ENCODE measurements at regions of chr3 and their contacts with region 1.

Region 1: DNA sequence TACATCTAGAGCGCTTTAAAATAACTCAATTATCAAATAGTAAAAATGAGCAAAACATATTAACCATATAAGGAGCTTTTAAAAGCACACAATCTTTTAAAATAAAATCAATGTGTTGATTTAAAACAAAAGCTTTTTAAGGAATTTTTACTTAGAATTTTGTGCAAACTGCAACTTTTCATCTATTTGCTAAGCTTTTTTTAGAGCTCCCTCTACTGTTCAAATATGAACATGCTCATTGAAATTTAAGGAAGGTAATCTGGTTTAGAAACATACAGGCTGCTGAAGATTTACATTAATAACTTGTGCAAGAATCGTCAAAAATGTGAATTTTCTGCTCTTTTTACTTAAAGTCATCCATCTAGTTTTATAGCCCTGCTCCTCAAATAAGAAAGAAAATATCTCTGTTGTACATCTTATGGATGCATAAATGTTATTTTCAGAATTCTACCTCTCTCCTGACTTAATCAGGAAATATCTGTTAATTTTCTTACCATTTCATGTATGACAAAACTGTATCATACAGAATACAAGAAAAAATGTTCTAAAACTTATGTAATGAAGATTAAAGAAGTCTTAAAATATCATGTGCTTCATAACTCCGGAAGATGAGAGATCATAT is 469.4 kb upstream of the ROBO2 start:
- DNase-seq: peak; percentile 48
- ATAC-seq: no peak
- H3K4me3 ChIP-seq: no peak overlapping the region
- H3K27ac ChIP-seq: no peak overlapping the region
- H3K4me1 ChIP-seq: no peaks in the 10 kb centered on the region
- H3K27me3 ChIP-seq: no peaks in the 10 kb centered on the region
- CTCF ChIP-seq: peak; percentile 89

Region 2: GRCh38 chr3:75814797-75815196 is 755.8 kb before region 1 on chr3:
- CTCF ChIA-PET with region 1: no interaction called
- POLR2A ChIA-PET with region 1: no interaction called
- intact Hi-C with region 1: loop called (anchors 5 kb)
- DNase-seq: no peak
- ATAC-seq: no peak
- H3K4me3 ChIP-seq: no peak overlapping the region
- H3K27ac ChIP-seq: no peak overlapping the region
- H3K4me1 ChIP-seq: no peaks in the 10 kb centered on the region
- H3K27me3 ChIP-seq: no peaks in the 10 kb centered on the region
- CTCF ChIP-seq: no peak

Region 3: DNA sequence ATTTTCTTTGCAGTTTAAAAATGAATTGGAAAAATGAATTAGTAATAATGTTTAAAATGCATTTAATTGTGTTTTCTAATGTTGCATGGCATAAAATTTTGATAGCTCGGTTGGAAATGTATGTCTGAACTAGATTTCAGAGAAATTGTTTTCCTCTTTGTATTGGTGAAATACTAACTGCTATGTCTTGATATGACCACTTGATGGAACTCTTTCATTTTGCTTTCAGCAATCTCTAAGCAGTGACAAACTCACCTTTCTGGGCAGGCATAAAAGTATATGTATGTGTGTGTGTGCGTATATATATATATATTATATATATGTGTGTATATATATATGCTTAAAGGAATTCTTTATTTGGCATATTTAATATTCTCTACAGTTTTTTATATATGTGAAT is 545.9 kb before region 1 on chr3:
- CTCF ChIA-PET with region 1: no interaction called
- POLR2A ChIA-PET with region 1: no interaction called
- intact Hi-C with region 1: loop called (anchors 5 kb)
- DNase-seq: peak; percentile 63
- ATAC-seq: peak; percentile 63
- H3K4me3 ChIP-seq: no peak overlapping the region
- H3K27ac ChIP-seq: no peak overlapping the region
- H3K4me1 ChIP-seq: peaks cover 15% of the 10 kb centered on the region
- H3K27me3 ChIP-seq: no peaks in the 10 kb centered on the region
- CTCF ChIP-seq: peak; percentile 66

Region 4: GRCh38 chr3:76044601-76045600 is 525.6 kb before region 1 on chr3:
- CTCF ChIA-PET with region 1: no interaction called
- POLR2A ChIA-PET with region 1: no interaction called
- intact Hi-C with region 1: loop called (anchors 5 kb)
- DNase-seq: peak; percentile 69
- ATAC-seq: peak; percentile 60
- H3K4me3 ChIP-seq: no peak overlapping the region
- H3K27ac ChIP-seq: no peak overlapping the region
- H3K4me1 ChIP-seq: peaks cover 6% of the 10 kb centered on the region
- H3K27me3 ChIP-seq: no peaks in the 10 kb centered on the region
- CTCF ChIP-seq: peak; percentile 88

Region 5: DNA sequence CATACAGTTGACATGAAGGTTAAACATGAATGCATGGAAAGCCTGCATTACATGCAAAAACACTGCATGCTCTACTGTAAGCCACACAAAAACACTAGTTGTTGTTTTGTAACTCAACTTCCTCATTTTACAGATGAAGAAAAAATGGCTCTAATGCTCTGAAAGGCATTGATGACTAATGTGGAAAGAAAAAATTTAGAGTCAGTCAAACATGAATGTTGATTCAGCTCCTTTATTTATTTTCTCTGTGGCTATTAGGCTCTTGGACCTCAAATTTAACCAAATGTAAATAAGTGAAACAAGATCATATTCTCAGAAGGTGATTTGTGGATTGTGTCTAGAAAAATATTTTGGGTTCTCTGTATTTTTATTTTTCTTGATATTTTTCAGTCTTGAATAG is 448.5 kb before region 1 on chr3:
- CTCF ChIA-PET with region 1: no interaction called
- POLR2A ChIA-PET with region 1: no interaction called
- intact Hi-C with region 1: loop called (anchors 10 kb)
- DNase-seq: peak; percentile 79
- ATAC-seq: peak; percentile 77
- H3K4me3 ChIP-seq: no peak overlapping the region
- H3K27ac ChIP-seq: no peak overlapping the region
- H3K4me1 ChIP-seq: peaks cover 25% of the 10 kb centered on the region
- H3K27me3 ChIP-seq: no peaks in the 10 kb centered on the region
- CTCF ChIP-seq: no peak

Region 6: DNA sequence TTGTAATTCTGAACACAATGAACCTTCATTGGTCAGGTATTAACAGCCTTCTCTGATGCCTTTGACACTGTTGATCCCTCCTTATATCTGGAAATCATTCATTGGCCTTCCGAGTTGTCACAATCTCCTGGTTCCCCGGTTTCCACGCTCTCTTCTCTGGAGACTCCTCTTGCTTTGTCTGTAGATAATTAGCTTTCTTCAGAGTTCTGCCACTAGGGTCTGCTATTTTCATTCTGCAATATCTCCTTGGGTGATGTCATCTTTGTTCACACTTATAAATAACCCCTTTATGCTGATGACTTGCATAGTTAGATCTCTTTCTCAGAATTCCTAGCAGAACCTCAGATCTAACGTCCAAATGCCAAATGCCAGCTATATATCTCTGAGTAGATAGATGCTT is 201.4 kb before region 1 on chr3:
- CTCF ChIA-PET with region 1: no interaction called
- POLR2A ChIA-PET with region 1: no interaction called
- intact Hi-C with region 1: loop called (anchors 2 kb)
- DNase-seq: peak; percentile 46
- ATAC-seq: peak; percentile 58; the same call in 1 of the 2 replicates
- H3K4me3 ChIP-seq: no peak overlapping the region
- H3K27ac ChIP-seq: no peak overlapping the region
- H3K4me1 ChIP-seq: no peaks in the 10 kb centered on the region
- H3K27me3 ChIP-seq: peaks cover under 1% of the 10 kb centered on the region; the same call in 1 of the 2 replicates
- CTCF ChIP-seq: peak; percentile 55

Region 7: DNA sequence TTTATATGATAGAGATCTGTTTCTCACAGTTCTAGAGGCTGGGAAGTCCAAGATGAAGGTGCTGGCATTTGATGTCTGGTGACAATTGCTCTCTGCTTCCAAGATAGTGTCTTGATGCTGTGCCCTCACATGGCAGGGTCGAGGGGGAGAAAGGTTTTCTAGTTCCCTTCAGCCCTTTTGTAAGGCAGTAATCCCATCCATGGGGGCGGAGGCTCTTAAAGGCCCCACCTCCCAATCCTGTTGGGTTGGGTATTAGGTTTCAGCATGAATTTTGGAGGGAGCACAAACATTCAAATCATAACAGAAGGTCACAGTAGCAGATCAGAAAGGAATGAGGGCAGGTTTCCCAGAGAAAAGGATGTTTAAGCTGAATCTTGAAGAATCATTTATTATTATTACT is 183.5 kb before region 1 on chr3:
- CTCF ChIA-PET with region 1: no interaction called
- POLR2A ChIA-PET with region 1: no interaction called
- intact Hi-C with region 1: no loop called
- DNase-seq: no peak
- ATAC-seq: no peak
- H3K4me3 ChIP-seq: no peak overlapping the region
- H3K27ac ChIP-seq: no peak overlapping the region
- H3K4me1 ChIP-seq: no peaks in the 10 kb centered on the region
- H3K27me3 ChIP-seq: 0 out of 2 replicates have a peak, but pooled peaks cover 9% of the 10 kb centered on the region
- CTCF ChIP-seq: no peak

Region 8: GRCh38 chr3:76456322-76456721 is 114.2 kb before region 1 on chr3:
- CTCF ChIA-PET with region 1: no interaction called
- POLR2A ChIA-PET with region 1: no interaction called
- intact Hi-C with region 1: no loop called
- DNase-seq: peak; percentile 36
- ATAC-seq: peak; percentile 29; the same call in 1 of the 2 replicates
- H3K4me3 ChIP-seq: no peak overlapping the region
- H3K27ac ChIP-seq: no peak overlapping the region
- H3K4me1 ChIP-seq: no peaks in the 10 kb centered on the region
- H3K27me3 ChIP-seq: no peaks in the 10 kb centered on the region
- CTCF ChIP-seq: no peak

Measured in PC-3 (cell line).